Sigmoid colon (tissue), 7 donors: ENCODE measurements at regions of chr12 and their contacts with region 1.

Region 1: DNA sequence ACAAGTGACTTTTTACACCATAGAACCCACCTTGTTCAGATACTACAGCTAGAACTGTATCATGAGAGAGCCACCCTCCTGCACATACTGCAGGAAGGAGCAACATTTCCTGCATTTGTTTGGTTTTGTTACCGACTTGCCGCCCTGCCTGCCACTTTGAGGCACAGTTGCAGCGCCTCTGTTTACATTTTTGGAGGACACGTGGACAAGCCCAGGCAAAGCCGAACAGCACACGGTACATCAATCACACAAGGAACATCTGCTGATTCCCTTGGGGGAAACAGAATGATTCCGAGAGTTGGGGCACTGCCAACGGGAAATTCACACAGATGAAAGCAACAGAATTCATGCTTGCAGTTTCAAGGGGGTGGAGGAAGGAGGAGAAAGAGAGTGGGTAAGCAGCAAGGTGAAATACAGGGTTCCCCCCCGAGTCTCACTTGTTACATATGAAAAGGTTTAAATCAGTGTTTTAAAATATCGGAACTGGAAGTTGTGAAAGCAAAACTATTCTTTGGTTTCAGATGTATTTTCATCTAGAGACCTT is 110.7 kb downstream of the BTG1 start:
- DNase-seq: peak; percentile 79
- H3K4me3 ChIP-seq: peak overlapping the region; percentile 5 to 41 (median 29)
- H3K27ac ChIP-seq: peak overlapping the region; percentile 54 to 82 (median 80)
- H3K4me1 ChIP-seq: peaks cover 0 to 64% (median 42%) of the 10 kb centered on the region in 4 donors
- H3K27me3 ChIP-seq: no peaks in the 10 kb centered on the region
- CTCF ChIP-seq: no peak
- EP300 ChIP-seq: peak in 1 of 4 donors; percentile 61
- POLR2A ChIP-seq: no peak

Region 2: GRCh38 chr12:92065018-92065499 is 30.1 kb after region 1 on chr12:
- intact Hi-C with region 1: loop called (anchors 5 kb)
- DNase-seq: peak; percentile 70
- H3K4me3 ChIP-seq: peak overlapping the region in 3 of 4 donors; percentile 17 to 28 (median 26)
- H3K27ac ChIP-seq: peak overlapping the region; percentile 55 to 80 (median 69)
- H3K4me1 ChIP-seq: peaks cover 0 to 49% (median 43%) of the 10 kb centered on the region in 4 donors
- H3K27me3 ChIP-seq: no peaks in the 10 kb centered on the region
- CTCF ChIP-seq: no peak
- EP300 ChIP-seq: peak in 1 of 4 donors; percentile 24
- POLR2A ChIP-seq: no peak

Region 3: GRCh38 chr12:92259852-92260251 is 224.9 kb after region 1 on chr12:
- intact Hi-C with region 1: no loop called
- DNase-seq: no peak
- H3K4me3 ChIP-seq: no peak overlapping the region
- H3K27ac ChIP-seq: no peak overlapping the region
- H3K4me1 ChIP-seq: no peaks in the 10 kb centered on the region
- H3K27me3 ChIP-seq: no peaks in the 10 kb centered on the region
- CTCF ChIP-seq: no peak
- EP300 ChIP-seq: no peak
- POLR2A ChIP-seq: no peak

Region 4: DNA sequence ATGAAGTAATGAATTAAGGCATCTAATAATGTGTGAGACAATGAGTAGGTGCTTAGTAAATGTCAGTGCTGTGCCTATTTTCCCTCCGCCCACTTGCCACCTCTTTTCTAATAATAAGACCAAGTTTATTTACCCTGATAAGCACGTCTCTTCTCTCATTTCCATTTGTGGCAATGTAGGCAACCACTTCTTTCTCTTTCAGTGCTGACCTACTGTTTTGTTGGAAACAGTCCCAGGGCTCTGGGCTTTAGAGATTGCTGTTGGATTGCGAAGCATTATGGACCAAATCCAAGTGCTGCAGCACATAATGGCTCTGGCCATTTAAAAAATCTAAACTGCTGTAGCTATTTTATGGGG is 526.6 kb after region 1 on chr12:
- intact Hi-C with region 1: loop called (anchors 10 kb)
- DNase-seq: peak; percentile 88
- H3K4me3 ChIP-seq: no peak overlapping the region
- H3K27ac ChIP-seq: peak overlapping the region; percentile 25 to 82 (median 68)
- H3K4me1 ChIP-seq: peaks cover 2 to 41% (median 24%) of the 10 kb centered on the region in 4 donors
- H3K27me3 ChIP-seq: no peaks in the 10 kb centered on the region
- CTCF ChIP-seq: no peak
- EP300 ChIP-seq: peak in 1 of 4 donors; percentile 58
- POLR2A ChIP-seq: no peak